ENCODE measurements at regions of chrX and their contacts with region 1.

Region 1: DNA sequence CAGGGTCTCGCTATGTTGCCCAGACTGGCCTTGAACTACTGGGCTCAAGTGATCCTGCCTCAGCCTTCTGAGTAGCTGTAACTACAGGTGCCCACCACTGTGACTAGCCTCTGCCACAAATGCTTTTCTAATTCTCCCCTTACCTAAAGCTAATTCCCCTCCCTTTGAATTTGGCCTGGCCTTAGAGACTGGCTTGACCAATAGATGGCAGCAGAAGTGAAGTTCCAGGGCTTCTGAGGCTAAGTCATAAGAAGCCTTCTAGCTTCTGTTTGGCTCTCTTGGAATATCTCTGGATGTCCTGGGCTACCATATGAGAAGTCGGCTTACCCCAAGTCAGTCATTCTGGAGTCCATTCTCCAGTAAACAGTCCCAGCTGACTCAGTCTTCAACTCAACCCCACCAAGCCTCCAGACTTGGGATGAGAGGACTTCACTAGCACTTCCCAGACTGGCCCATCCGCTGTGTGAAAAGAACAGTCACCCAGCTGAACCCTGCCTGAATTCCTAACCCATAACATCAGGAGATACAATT is 61.0 kb downstream of the HPRT1 start:
- DNase-seq: peak; percentile 50
- H3K4me3 ChIP-seq: no peak overlapping the region
- H3K27ac ChIP-seq: no peak overlapping the region
- H3K4me1 ChIP-seq: no peaks in the 10 kb centered on the region
- H3K27me3 ChIP-seq: no peaks in the 10 kb centered on the region
- CTCF ChIP-seq: peak; percentile 66 to 77

Region 2: GRCh38 chrX:134542485-134542884 is 21.6 kb after region 1 on chrX:
- CTCF ChIA-PET with region 1: no interaction called
- dilution Hi-C with region 1: no loop called
- in situ Hi-C with region 1: no loop called
- intact Hi-C with region 1: loop called (anchors 2 kb)
- DNase-seq: peak; percentile 69
- H3K4me3 ChIP-seq: no peak overlapping the region
- H3K27ac ChIP-seq: no peak overlapping the region
- H3K4me1 ChIP-seq: peaks cover 12% of the 10 kb centered on the region
- H3K27me3 ChIP-seq: no peaks in the 10 kb centered on the region
- CTCF ChIP-seq: no peak

Region 3: GRCh38 chrX:134572816-134573682 is 52.1 kb after region 1 on chrX:
- CTCF ChIA-PET with region 1: no interaction called
- dilution Hi-C with region 1: no loop called
- in situ Hi-C with region 1: no loop called
- intact Hi-C with region 1: loop called (anchors 1 kb)
- DNase-seq: peak; percentile 83
- H3K4me3 ChIP-seq: no peak overlapping the region
- H3K27ac ChIP-seq: no peak overlapping the region
- H3K4me1 ChIP-seq: peaks cover 15% of the 10 kb centered on the region
- H3K27me3 ChIP-seq: no peaks in the 10 kb centered on the region
- CTCF ChIP-seq: no peak

Region 4: DNA sequence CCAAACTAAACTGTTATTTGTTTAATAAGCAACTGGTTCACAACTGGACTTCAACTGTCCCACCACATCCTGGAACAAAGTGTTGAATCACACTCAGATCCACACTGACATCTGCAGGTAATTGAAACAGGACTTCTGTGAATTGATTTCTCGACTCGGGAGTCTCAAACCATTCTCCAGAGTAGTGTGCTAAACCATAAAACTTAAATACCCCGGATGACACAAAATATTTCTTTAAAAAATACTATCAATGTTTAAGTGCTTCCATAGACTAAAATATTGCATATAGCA is 232.7 kb after region 1 on chrX:
- CTCF ChIA-PET with region 1: no interaction called
- dilution Hi-C with region 1: no loop called
- in situ Hi-C with region 1: loop called in 1 of 2 experiments (anchors 10 kb)
- intact Hi-C with region 1: loop called (anchors 1 kb)
- DNase-seq: peak; percentile 19
- H3K4me3 ChIP-seq: no peak overlapping the region
- H3K27ac ChIP-seq: no peak overlapping the region
- H3K4me1 ChIP-seq: no peaks in the 10 kb centered on the region
- H3K27me3 ChIP-seq: no peaks in the 10 kb centered on the region
- CTCF ChIP-seq: peak; percentile 12 to 26

Measured in mammary epithelial cell (primary cell).